ENCODE measurements at regions of chr18 and their contacts with region 1.

Region 1: DNA sequence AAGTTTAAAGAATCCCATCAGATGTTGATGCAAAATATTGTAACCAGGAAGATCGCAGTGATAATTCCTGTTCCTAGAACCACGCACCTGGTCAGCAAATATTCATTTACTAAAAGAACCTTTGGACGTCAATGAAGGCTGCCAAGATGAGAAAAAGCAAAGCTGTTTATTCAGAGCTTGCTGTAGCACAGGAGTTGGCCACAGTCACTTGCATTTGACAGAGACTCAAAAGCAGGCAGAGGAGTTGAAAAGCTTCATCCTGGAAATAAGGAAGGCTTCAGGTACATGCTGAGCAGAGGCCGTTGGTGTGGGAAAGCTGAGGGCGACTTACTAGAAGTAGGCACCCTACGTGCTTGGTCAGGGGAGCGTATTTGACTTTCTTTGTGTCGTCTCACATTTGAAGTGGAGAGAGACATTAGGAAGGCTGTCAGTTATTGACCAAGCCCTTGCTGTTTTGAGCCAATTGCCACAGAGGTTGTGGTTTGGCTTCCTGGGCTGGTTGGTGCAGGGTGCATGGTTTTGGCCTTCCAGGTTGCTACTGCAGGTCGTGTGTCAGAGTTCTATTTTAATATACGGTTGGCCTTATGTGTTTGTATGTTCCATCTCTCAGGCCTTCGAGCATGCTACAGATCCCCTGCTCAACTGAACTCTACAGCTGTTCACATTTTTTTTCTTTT is 289.6 kb downstream of the METTL4 start:
- DNase-seq: no peak
- H3K4me3 ChIP-seq: no peak overlapping the region
- H3K27ac ChIP-seq: no peak overlapping the region
- H3K4me1 ChIP-seq: no peaks in the 10 kb centered on the region
- H3K27me3 ChIP-seq: no peaks in the 10 kb centered on the region
- CTCF ChIP-seq: no peak
- EP300 ChIP-seq: no peak
- POLR2A ChIP-seq: no peak

Region 2: GRCh38 chr18:2049986-2050385 is 231.7 kb before region 1 on chr18:
- intact Hi-C with region 1: loop called in 1 of 4 experiments (anchors 10 kb)
- DNase-seq: no peak
- H3K4me3 ChIP-seq: no peak overlapping the region
- H3K27ac ChIP-seq: no peak overlapping the region
- H3K4me1 ChIP-seq: no peaks in the 10 kb centered on the region
- H3K27me3 ChIP-seq: no peaks in the 10 kb centered on the region
- CTCF ChIP-seq: no peak
- EP300 ChIP-seq: no peak
- POLR2A ChIP-seq: no peak

Measured in ovary (tissue), 10 donors.